Activated CD4-positive, alpha-beta memory T cell treated with anti-CD3 and anti-CD28 coated beads for 36 hours (primary cell): ENCODE measurements at regions of chr19 and their contacts with region 1.

Region 1: GRCh38 chr19:47157431-47158321 is 27.0 kb downstream of the SAE1 start:
- DNase-seq: peak; percentile 49
- H3K4me3 Mint-ChIP-seq: peak overlapping the region; percentile 43
- H3K27ac Mint-ChIP-seq: peak overlapping the region; percentile 84
- H3K4me1 Mint-ChIP-seq: peaks cover 64% of the 10 kb centered on the region
- H3K27me3 Mint-ChIP-seq: no peaks in the 10 kb centered on the region

Region 2: GRCh38 chr19:47143322-47144073 is 14.2 kb before region 1 on chr19:
- CTCF ChIA-PET with region 1: interaction called, 8 read pairs
- POLR2A ChIA-PET with region 1: interaction called, 11 read pairs
- intact Hi-C with region 1: loop called (anchors 1 kb)
- DNase-seq: peak; percentile 31
- H3K4me3 Mint-ChIP-seq: no peak overlapping the region
- H3K27ac Mint-ChIP-seq: peak overlapping the region; percentile 36
- H3K4me1 Mint-ChIP-seq: peaks cover 68% of the 10 kb centered on the region
- H3K27me3 Mint-ChIP-seq: no peaks in the 10 kb centered on the region

Region 3: GRCh38 chr19:47176627-47177090 is 19.0 kb after region 1 on chr19:
- CTCF ChIA-PET with region 1: interaction called, 41 read pairs
- POLR2A ChIA-PET with region 1: interaction called, 22 read pairs
- intact Hi-C with region 1: loop called (anchors 1 kb)
- DNase-seq: peak; percentile 64
- H3K4me3 Mint-ChIP-seq: peak overlapping the region; percentile 49
- H3K27ac Mint-ChIP-seq: peak overlapping the region; percentile 90
- H3K4me1 Mint-ChIP-seq: peaks cover 61% of the 10 kb centered on the region
- H3K27me3 Mint-ChIP-seq: no peaks in the 10 kb centered on the region

Region 4: DNA sequence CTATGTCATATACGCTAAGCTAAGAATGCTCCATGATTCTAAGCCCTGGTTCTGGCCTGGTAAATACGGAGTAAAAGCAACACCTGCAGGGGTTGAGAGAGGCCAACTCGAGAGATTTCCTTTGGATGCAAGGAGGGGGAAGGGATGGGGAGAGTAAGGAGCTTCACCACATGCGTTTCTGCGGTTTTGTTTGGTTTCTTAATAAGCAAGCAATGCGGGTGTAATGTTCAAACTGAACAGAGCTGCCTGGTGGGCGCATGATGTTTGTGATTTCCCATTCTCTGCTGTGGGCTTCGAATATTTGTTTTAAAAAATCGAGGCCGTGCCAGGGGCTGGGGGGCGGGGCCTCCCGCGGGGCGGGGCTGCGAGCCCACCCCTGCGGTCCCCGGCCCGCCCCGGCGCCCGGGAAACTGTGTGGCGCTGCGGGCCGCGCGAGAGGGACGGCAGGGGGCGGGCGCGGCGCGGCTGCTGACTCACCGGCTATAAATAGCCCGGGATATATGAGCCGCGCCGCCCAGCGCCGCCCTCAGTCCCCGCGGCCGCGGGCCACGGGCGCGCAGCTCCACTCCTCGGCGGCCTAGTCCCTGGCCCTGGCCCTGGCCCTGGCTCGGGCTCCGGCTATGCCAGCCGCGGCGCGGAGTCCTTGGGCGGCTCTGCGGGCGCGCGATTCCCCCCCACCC is 68.2 kb after region 1 on chr19:
- CTCF ChIA-PET with region 1: interaction called, 6 read pairs
- POLR2A ChIA-PET with region 1: interaction called, 3 read pairs
- intact Hi-C with region 1: loop called (anchors 2 kb)
- DNase-seq: peak; percentile 88
- H3K4me3 Mint-ChIP-seq: peak overlapping the region; percentile 77
- H3K27ac Mint-ChIP-seq: peak overlapping the region; percentile 89
- H3K4me1 Mint-ChIP-seq: peaks cover 10% of the 10 kb centered on the region
- H3K27me3 Mint-ChIP-seq: no peaks in the 10 kb centered on the region